ENCODE measurements at regions of chr7 and their contacts with region 1.

Region 1: GRCh38 chr7:36315309-36316133 is 74.1 kb upstream of the ANLN start:
- DNase-seq: peak in 2 of 4 donors; percentile 25 to 34
- ATAC-seq: no peak
- H3K4me3 ChIP-seq: no peak overlapping the region
- H3K27ac ChIP-seq: no peak overlapping the region
- H3K4me1 ChIP-seq: peaks cover 19% of the 10 kb centered on the region
- H3K27me3 ChIP-seq: no peaks in the 10 kb centered on the region
- CTCF ChIP-seq: no peak
- POLR2A ChIP-seq: no peak

Region 2: GRCh38 chr7:35983626-35984025 is 331.9 kb before region 1 on chr7:
- intact Hi-C with region 1: loop called (anchors 5 kb)
- DNase-seq: no peak
- ATAC-seq: no peak
- H3K4me3 ChIP-seq: no peak overlapping the region
- H3K27ac ChIP-seq: no peak overlapping the region
- H3K4me1 ChIP-seq: peaks cover 20% of the 10 kb centered on the region
- H3K27me3 ChIP-seq: no peaks in the 10 kb centered on the region
- CTCF ChIP-seq: no peak
- POLR2A ChIP-seq: no peak